Colonic mucosa (tissue), 4 donors: ENCODE measurements at regions of chr10 and their contacts with region 1.

Region 1: DNA sequence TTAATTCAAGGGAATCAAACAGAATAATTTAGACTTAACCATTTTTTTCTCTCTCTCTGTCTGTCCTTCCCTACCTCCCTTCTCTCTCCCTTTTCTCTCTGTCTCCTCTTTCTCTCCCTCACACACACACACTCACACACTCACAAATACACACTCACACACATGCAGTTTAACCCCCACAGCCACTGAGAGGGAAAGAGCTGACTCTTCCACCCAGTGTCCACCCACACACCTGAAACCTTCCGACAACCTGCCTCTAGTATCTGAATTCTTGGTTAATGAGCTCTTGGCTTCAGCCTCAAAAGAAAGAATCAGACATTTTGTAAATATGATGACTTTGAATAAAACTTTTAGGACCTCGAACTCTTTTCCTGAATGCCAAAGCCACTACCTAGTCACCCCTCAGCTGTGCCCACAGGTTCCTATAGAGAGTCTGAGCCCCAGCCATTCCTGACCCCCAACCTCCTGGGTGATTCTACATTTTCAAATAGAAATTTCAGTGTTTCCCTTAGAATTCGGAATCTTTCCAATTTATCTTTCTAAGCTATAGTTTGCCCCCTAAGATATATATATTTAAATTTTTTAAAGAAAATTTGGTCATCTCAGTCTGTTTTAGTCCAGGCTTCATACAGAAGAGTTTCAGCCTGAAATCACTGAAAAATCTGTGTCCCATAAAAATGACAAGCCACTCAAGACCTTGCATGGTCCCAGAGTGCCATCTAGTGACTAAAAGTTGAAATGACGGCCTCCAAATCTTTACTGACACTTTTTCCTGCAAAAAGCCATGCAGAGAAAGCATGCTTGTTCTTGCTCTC is 202.8 kb downstream of the IPMK start:
- DNase-seq: peak; percentile 45
- H3K4me3 ChIP-seq: no peak overlapping the region
- H3K27ac ChIP-seq: no peak overlapping the region
- H3K4me1 ChIP-seq: no peaks in the 10 kb centered on the region
- H3K27me3 ChIP-seq: no peaks in the 10 kb centered on the region
- CTCF ChIP-seq: peak; percentile 56

Region 2: GRCh38 chr10:57716886-57717285 is 348.0 kb before region 1 on chr10:
- intact Hi-C with region 1: loop called (anchors 5 kb)
- DNase-seq: no peak
- H3K4me3 ChIP-seq: no peak overlapping the region
- H3K27ac ChIP-seq: no peak overlapping the region
- H3K4me1 ChIP-seq: no peaks in the 10 kb centered on the region
- H3K27me3 ChIP-seq: no peaks in the 10 kb centered on the region
- CTCF ChIP-seq: no peak

Region 3: DNA sequence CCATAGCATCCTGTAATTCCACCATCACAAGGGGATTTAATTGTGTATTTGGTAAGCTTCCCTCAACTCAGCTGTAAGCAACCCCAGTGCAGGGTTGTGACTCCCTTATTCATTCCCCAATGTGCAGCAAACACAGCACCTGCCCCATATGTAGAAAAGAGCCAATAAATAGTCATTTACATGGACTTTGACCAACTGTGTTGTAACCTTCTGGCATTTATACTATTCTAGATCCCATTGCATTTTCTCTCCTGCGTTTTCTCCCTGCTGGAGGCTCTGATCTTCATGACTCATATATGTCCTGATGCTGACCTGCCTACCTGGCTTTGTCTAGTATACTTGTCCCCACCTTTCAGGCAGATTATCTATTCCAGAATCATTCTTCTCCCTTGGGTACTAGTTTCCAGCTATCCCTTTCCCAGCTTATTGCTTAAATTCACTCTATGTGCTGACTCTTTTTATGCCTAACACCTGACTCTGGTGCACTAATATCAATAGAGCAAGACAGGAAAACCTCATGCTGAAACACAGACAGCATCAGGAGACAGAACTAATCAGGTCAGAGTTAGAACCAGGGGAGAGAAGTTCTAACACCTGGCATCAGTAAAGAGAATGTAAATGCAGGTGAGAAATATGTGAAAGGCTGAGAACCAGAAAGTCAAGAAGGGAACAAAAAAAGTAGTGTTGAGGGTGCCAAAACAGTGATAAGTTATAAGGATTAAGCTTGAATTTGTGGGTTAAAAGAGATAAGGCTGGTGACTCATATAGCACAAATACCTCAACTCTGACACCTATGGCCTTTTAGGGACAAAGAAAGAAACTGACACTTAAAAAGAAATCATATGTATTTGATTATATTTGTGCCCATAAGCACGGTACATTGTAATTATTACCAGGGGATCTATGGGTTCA is 199.9 kb before region 1 on chr10:
- intact Hi-C with region 1: loop called (anchors 10 kb)
- DNase-seq: peak; percentile 47
- H3K4me3 ChIP-seq: no peak overlapping the region
- H3K27ac ChIP-seq: no peak overlapping the region
- H3K4me1 ChIP-seq: no peaks in the 10 kb centered on the region
- H3K27me3 ChIP-seq: no peaks in the 10 kb centered on the region
- CTCF ChIP-seq: no peak